Ascending aorta (tissue), 2 donors: ENCODE measurements at regions of chr13 and their contacts with region 1.

Region 1: GRCh38 chr13:49690992-49691886 is at the start of gene EBPL:
- DNase-seq: peak; percentile 72 to 95
- H3K4me3 ChIP-seq: peak within 1 kb of the TSS; percentile 84 to 93
- H3K27ac ChIP-seq: peak within 1 kb of the TSS; percentile 66 to 88
- H3K4me1 ChIP-seq: peaks cover 0 to 3% of the 10 kb centered on the region in 2 donors
- H3K27me3 ChIP-seq: no peaks in the 10 kb centered on the region
- CTCF ChIP-seq: no peak
- total RNA-seq, gene EBPL: 18.3 TPM

Region 2: GRCh38 chr13:49585220-49586157 is 105.8 kb before region 1 on chr13 and contains the start of gene RCBTB1:
- intact Hi-C with region 1: loop called (anchors 2 kb)
- DNase-seq: peak in 1 of 2 donors; percentile 81
- H3K4me3 ChIP-seq: peak within 1 kb of the TSS; percentile 73 to 92
- H3K27ac ChIP-seq: peak within 1 kb of the TSS; percentile 71 to 72
- H3K4me1 ChIP-seq: peaks cover 0 to 15% of the 10 kb centered on the region in 2 donors
- H3K27me3 ChIP-seq: no peaks in the 10 kb centered on the region
- CTCF ChIP-seq: no peak
- total RNA-seq, gene RCBTB1: 2.0 TPM

Region 3: GRCh38 chr13:49641801-49642291 is 49.4 kb before region 1 on chr13:
- intact Hi-C with region 1: no loop called
- DNase-seq: peak in 1 of 2 donors; percentile 74
- H3K4me3 ChIP-seq: peak overlapping the region in 1 of 2 donors; percentile 30
- H3K27ac ChIP-seq: peak overlapping the region; percentile 12 to 48
- H3K4me1 ChIP-seq: no peaks in the 10 kb centered on the region
- H3K27me3 ChIP-seq: no peaks in the 10 kb centered on the region
- CTCF ChIP-seq: no peak

Region 4: DNA sequence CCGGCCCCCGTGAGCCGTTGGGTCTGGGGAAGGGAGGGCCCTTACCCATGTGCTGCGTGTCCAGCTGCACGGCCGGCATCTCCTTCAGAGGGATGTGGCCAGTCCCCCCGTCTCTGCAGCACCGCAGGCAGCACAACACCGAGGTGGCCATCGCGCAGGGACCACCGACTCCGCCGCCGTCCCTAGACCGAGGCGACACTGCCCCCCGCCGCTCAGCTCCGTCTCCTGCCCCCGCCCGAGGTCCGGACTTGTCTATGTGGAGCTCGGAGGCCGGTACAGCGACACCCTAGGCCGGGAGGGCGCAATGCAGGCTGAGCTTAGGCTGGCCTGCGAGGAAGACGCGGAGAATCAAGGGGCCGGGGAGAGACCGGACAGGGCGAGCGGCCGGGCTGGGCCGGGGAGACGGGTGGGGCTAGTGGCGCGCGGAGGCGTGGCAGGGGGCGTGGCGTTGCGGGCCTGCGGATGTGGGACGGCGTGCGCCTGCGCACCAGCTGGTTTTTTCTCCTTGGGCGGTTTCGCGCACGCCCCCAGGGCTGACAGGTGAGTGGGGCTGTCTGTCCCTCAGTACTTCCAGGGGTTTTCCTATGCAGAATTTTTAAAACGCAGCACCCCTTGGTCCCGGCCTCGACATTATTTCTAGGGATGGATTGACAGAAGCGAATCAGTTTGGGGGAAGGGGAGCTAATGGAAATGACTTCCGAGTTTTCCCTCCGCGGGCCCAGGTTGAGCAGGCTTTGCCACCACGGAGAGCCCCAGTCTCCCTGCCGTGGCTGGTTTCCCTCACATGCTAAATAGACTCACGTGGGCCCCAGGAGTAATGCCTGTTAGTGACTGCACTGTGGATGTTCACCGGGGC is 245.1 kb after region 1 on chr13 and contains the start of gene SPRYD7:
- intact Hi-C with region 1: loop called (anchors 10 kb)
- DNase-seq: peak; percentile 92 to 99
- H3K4me3 ChIP-seq: peak within 1 kb of the TSS; percentile 78 to 97
- H3K27ac ChIP-seq: peak within 1 kb of the TSS; percentile 78 to 93
- H3K4me1 ChIP-seq: peaks cover 0 to 17% of the 10 kb centered on the region in 2 donors
- H3K27me3 ChIP-seq: no peaks in the 10 kb centered on the region
- CTCF ChIP-seq: peak; percentile 89 to 97 (median 94)
- total RNA-seq, gene SPRYD7: 1.7 TPM